GM18951 (cell line): ENCODE measurements at regions of chr2 and their contacts with region 1.

Region 1: DNA sequence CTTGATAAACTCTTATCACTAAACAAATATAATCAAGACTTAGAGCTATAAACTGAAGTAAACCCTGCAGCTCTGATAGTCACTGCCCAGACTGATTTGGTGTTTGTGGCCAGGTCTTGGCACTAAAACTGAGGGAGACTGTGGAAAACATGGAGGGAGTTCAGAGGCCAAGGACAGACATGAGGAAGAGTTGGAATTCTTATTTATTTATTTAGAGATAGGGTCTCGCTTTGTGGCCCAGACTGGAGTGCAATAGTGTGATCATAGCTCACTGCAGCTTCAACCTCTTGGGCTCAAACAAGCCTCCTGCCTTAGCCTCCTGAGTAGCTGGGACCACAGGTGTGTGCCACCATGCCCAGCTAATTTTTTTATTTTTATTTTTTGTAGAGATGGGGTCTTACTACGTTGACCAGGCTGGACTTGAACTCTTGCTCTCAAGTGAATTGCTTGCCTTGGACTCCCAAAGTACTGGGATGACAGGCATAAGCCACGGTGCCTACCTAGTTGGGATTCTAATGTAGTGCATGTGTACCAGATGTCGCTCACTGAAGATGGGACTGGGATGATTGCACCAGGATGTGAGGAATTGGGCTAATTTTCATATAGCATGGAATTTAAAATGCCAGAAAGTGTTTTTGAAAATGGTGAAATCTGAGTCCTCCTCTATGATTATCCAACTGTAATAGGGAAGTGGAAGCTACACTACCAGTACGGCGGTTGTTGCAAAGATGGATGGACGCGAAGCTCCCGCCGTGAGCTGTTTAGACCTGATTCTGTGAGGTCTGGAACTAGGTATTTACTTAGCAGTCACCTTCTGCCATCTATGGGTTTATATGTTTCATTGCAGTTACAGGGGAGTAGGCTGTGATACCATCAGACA is 52.7 kb upstream of the CTLA4 start:
- POLR2A ChIP-seq: no peak

Region 2: GRCh38 chr2:203470371-203470770 is 344.5 kb before region 1 on chr2:
- in situ Hi-C with region 1: loop called (anchors 10 kb)
- POLR2A ChIP-seq: no peak